ENCODE measurements at regions of chr15 and their contacts with region 1.

Region 1: DNA sequence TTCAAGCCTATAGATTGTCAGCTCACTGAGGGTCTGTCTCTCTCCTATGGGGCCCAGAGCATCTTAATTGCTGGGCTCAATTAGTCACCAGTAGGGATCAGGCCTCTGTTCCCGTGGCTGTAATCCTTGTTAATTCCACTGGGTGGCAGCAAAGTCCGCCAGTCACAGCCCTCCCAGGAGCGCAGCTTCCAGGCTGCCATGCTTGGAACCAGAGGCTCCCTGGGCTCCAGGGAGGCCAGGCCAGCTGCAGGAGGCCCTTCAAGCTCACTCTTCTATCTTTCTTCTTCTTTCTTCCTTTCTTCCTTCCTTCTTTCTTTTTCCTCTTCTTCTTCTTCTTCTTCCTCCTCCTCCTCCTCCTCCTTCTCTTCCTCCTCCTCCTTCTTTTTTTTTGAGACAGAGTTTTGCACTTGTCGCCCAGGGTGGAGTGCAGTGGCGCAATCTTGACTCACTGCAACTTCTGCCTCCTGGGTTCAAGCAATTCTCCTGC is 14.4 kb downstream of the RNU5B-1 start:
- DNase-seq: peak; percentile 85
- H3K4me3 ChIP-seq: no peak overlapping the region
- H3K27ac ChIP-seq: no peak overlapping the region
- H3K4me1 ChIP-seq: no peaks in the 10 kb centered on the region
- H3K27me3 ChIP-seq: peaks cover 17% of the 10 kb centered on the region

Region 2: GRCh38 chr15:65374821-65375401 is 56.0 kb after region 1 on chr15:
- in situ Hi-C with region 1: loop called (anchors 5 kb)
- DNase-seq: no peak
- H3K4me3 ChIP-seq: no peak overlapping the region
- H3K27ac ChIP-seq: no peak overlapping the region
- H3K4me1 ChIP-seq: no peaks in the 10 kb centered on the region
- H3K27me3 ChIP-seq: peaks cover 57% of the 10 kb centered on the region

Region 3: GRCh38 chr15:65392368-65392767 is 73.5 kb after region 1 on chr15:
- in situ Hi-C with region 1: loop called (anchors 5 kb)
- DNase-seq: no peak
- H3K4me3 ChIP-seq: no peak overlapping the region
- H3K27ac ChIP-seq: no peak overlapping the region
- H3K4me1 ChIP-seq: no peaks in the 10 kb centered on the region
- H3K27me3 ChIP-seq: peaks cover 13% of the 10 kb centered on the region

Region 4: GRCh38 chr15:65832549-65833364 is 513.8 kb after region 1 on chr15:
- in situ Hi-C with region 1: no loop called
- DNase-seq: peak; percentile 97
- H3K4me3 ChIP-seq: peak overlapping the region; percentile 61
- H3K27ac ChIP-seq: peak overlapping the region; percentile 77
- H3K4me1 ChIP-seq: peaks cover 12% of the 10 kb centered on the region
- H3K27me3 ChIP-seq: no peaks in the 10 kb centered on the region